Activated CD4-positive, alpha-beta T cell treated with anti-CD3 and anti-CD28 coated beads for 36 hours (primary cell): ENCODE measurements at regions of chr15 and their contacts with region 1.

Region 1: GRCh38 chr15:89556413-89557262 is 18.6 kb upstream of the TICRR start:
- DNase-seq: peak; percentile 55
- ATAC-seq: peak; percentile 44
- H3K4me3 Mint-ChIP-seq: no peak overlapping the region
- H3K27ac Mint-ChIP-seq: no peak overlapping the region
- H3K4me1 Mint-ChIP-seq: peaks cover 2% of the 10 kb centered on the region
- H3K27me3 Mint-ChIP-seq: peaks cover 4% of the 10 kb centered on the region

Region 2: GRCh38 chr15:89442671-89443307 is 113.8 kb before region 1 on chr15:
- CTCF ChIA-PET with region 1: interaction called, 5 read pairs
- POLR2A ChIA-PET with region 1: no interaction called
- intact Hi-C with region 1: loop called (anchors 1 to 5 kb)
- DNase-seq: peak; percentile 82
- ATAC-seq: peak; percentile 71
- H3K4me3 Mint-ChIP-seq: no peak overlapping the region
- H3K27ac Mint-ChIP-seq: no peak overlapping the region
- H3K4me1 Mint-ChIP-seq: no peaks in the 10 kb centered on the region
- H3K27me3 Mint-ChIP-seq: peaks cover 20% of the 10 kb centered on the region

Region 3: GRCh38 chr15:89494935-89495637 is 61.6 kb before region 1 on chr15:
- CTCF ChIA-PET with region 1: interaction called, 3 read pairs
- POLR2A ChIA-PET with region 1: no interaction called
- intact Hi-C with region 1: loop called (anchors 1 kb)
- DNase-seq: peak; percentile 69
- ATAC-seq: peak; percentile 49
- H3K4me3 Mint-ChIP-seq: no peak overlapping the region
- H3K27ac Mint-ChIP-seq: no peak overlapping the region
- H3K4me1 Mint-ChIP-seq: no peaks in the 10 kb centered on the region
- H3K27me3 Mint-ChIP-seq: peaks cover 36% of the 10 kb centered on the region

Region 4: GRCh38 chr15:89630974-89631901 is 74.6 kb after region 1 on chr15:
- CTCF ChIA-PET with region 1: no interaction called
- POLR2A ChIA-PET with region 1: no interaction called
- intact Hi-C with region 1: no loop called
- DNase-seq: no peak
- ATAC-seq: peak; percentile 52
- H3K4me3 Mint-ChIP-seq: no peak overlapping the region
- H3K27ac Mint-ChIP-seq: no peak overlapping the region
- H3K4me1 Mint-ChIP-seq: no peaks in the 10 kb centered on the region
- H3K27me3 Mint-ChIP-seq: no peaks in the 10 kb centered on the region